ENCODE measurements at regions of chr16 and their contacts with region 1.

Region 1: GRCh38 chr16:68264128-68265077 is at the start of gene SLC7A6:
- DNase-seq: peak; percentile 91
- ATAC-seq: peak; percentile 79
- H3K4me3 Mint-ChIP-seq: peak within 1 kb of the TSS; percentile 96
- H3K27ac Mint-ChIP-seq: peak within 1 kb of the TSS; percentile 98
- H3K4me1 Mint-ChIP-seq: peaks cover 49% of the 10 kb centered on the region
- H3K27me3 Mint-ChIP-seq: no peaks in the 10 kb centered on the region
- CTCF ChIP-seq: no peak
- total RNA-seq, gene SLC7A6: 52.5 and 54.1 TPM in 2 replicates

Region 2: DNA sequence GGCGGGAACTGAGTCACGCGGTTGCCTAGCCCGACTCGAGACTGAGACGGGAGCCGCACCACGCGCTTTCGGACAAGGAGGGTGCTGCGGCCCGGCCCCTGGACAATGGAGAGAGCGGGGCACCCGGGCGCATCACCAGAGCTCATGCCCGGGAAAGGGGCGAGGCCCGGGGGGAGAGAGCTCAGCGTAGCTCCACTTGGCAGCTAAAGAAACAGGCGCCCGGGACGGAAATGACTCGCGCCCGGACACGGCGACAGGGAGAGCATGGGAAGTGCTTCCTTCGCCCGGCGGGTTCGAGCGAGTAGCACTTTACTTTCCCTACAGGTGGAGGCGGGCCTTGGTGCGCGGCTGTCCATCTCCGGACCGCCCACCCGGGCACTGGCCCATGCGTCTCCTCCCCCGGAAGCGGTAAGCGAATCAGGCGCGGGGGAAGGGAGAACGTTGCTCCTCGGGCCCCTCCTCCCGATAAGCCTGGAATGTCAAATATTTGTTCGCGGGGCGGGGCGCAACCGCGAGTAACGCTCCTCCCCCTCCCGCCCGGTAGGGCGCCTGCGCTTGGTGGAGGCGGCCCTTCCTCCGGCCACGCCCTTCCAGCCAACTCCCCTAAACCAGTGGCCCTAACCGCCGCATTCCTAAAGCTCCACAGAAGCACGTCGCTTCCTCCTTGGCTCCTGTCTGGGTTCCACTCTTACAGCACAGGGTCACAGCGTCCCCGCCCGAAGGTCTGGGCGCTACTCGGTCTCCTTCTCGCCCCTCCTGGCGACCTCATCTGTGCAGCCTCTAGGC is 27.0 kb before region 1 on chr16:
- CTCF ChIA-PET with region 1: interaction called, 8 read pairs
- POLR2A ChIA-PET with region 1: no interaction called
- intact Hi-C with region 1: loop called (anchors 1 kb)
- DNase-seq: peak; percentile 84
- ATAC-seq: peak; percentile 83
- H3K4me3 Mint-ChIP-seq: peak overlapping the region; percentile 93
- H3K27ac Mint-ChIP-seq: peak overlapping the region; percentile 79
- H3K4me1 Mint-ChIP-seq: peaks cover 33% of the 10 kb centered on the region
- H3K27me3 Mint-ChIP-seq: no peaks in the 10 kb centered on the region
- CTCF ChIP-seq: no peak

Region 3: GRCh38 chr16:68251832-68252231 is 12.6 kb before region 1 on chr16:
- CTCF ChIA-PET with region 1: interaction called, 10 read pairs
- POLR2A ChIA-PET with region 1: interaction called, 8 read pairs
- intact Hi-C with region 1: no loop called
- DNase-seq: no peak
- ATAC-seq: peak; percentile 37
- H3K4me3 Mint-ChIP-seq: no peak overlapping the region
- H3K27ac Mint-ChIP-seq: no peak overlapping the region
- H3K4me1 Mint-ChIP-seq: peaks cover 31% of the 10 kb centered on the region
- H3K27me3 Mint-ChIP-seq: no peaks in the 10 kb centered on the region
- CTCF ChIP-seq: no peak

Region 4: GRCh38 chr16:68289621-68290329 is 25.4 kb after region 1 on chr16:
- CTCF ChIA-PET with region 1: interaction called, 166 read pairs
- POLR2A ChIA-PET with region 1: interaction called, 61 read pairs
- intact Hi-C with region 1: loop called (anchors 1 kb)
- DNase-seq: peak; percentile 67
- ATAC-seq: peak; percentile 89
- H3K4me3 Mint-ChIP-seq: peak overlapping the region; percentile 62
- H3K27ac Mint-ChIP-seq: peak overlapping the region; percentile 90
- H3K4me1 Mint-ChIP-seq: peaks cover 70% of the 10 kb centered on the region
- H3K27me3 Mint-ChIP-seq: no peaks in the 10 kb centered on the region
- CTCF ChIP-seq: no peak

Region 5: GRCh38 chr16:68328151-68328859 is 63.9 kb after region 1 on chr16:
- CTCF ChIA-PET with region 1: interaction called, 321 read pairs
- POLR2A ChIA-PET with region 1: interaction called, 22 read pairs
- intact Hi-C with region 1: loop called (anchors 1 kb)
- DNase-seq: peak; percentile 61
- ATAC-seq: peak; percentile 100
- H3K4me3 Mint-ChIP-seq: no peak overlapping the region
- H3K27ac Mint-ChIP-seq: no peak overlapping the region
- H3K4me1 Mint-ChIP-seq: peaks cover 14% of the 10 kb centered on the region
- H3K27me3 Mint-ChIP-seq: no peaks in the 10 kb centered on the region
- CTCF ChIP-seq: peak; percentile 99

Region 6: GRCh38 chr16:69132424-69133252 is 868.2 kb after region 1 on chr16 and contains the starts of genes CHTF8 and UTP4:
- CTCF ChIA-PET with region 1: no interaction called
- POLR2A ChIA-PET with region 1: no interaction called
- intact Hi-C with region 1: loop called (anchors 5 kb)
- DNase-seq: peak; percentile 89
- ATAC-seq: peak; percentile 85
- H3K4me3 Mint-ChIP-seq: peak within 1 kb of the TSS; percentile 94
- H3K27ac Mint-ChIP-seq: peak within 1 kb of the TSS; percentile 85
- H3K4me1 Mint-ChIP-seq: peaks cover 47% of the 10 kb centered on the region
- H3K27me3 Mint-ChIP-seq: no peaks in the 10 kb centered on the region
- CTCF ChIP-seq: no peak
- total RNA-seq, gene CHTF8: 134 and 143 TPM in 2 replicates
- total RNA-seq, gene UTP4: 53.5 and 55.3 TPM in 2 replicates